ENCODE measurements at regions of chr2 and their contacts with region 1.

Region 1: GRCh38 chr2:218852911-218853667 is 6.5 kb upstream of the WNT6 start:
- DNase-seq: peak; percentile 80
- H3K4me3 Mint-ChIP-seq: no peak overlapping the region
- H3K27ac Mint-ChIP-seq: no peak overlapping the region
- H3K4me1 Mint-ChIP-seq: no peaks in the 10 kb centered on the region
- H3K27me3 Mint-ChIP-seq: peaks cover 48% of the 10 kb centered on the region

Region 2: DNA sequence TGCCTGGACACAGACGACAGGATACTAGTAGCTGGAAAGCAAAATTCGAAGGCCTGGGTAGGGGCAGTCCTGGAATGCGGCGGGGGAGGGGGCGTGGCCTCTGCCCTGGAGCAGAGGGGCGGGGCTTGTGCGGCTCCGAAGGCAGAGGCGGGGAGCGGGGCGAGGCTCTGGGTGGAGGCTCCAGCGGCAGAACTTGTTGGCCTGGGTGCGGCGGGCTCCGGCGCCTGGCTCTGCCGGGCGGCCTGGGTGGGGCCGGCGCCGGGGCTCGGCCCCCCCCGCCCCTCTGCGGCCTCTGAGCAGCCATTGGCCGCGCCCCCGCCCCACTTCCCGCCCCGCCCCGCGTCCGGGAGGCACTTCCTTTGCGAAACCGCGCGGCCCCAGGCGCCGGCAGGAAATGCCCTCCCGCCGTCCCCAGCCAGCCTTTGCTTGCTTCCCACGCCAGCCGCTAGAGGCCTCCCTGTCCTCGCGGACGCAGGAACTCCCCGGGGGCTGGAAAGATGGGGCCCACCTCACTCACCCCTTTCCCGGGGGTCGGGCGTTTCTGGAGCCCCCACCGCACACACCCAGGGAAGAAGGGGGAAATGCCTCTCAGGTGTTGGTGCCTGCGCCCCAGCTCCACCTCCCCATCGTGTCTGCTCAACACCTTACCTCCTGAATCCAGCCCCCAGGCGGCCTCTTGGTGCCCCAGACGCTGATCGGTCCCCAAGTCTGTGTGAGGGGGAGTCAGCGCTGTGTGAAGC is 446.7 kb before region 1 on chr2:
- CTCF ChIA-PET with region 1: no interaction called
- POLR2A ChIA-PET with region 1: no interaction called
- intact Hi-C with region 1: loop called (anchors 5 kb)
- DNase-seq: peak; percentile 97
- H3K4me3 Mint-ChIP-seq: peak overlapping the region; percentile 71
- H3K27ac Mint-ChIP-seq: peak overlapping the region; percentile 81
- H3K4me1 Mint-ChIP-seq: peaks cover 42% of the 10 kb centered on the region
- H3K27me3 Mint-ChIP-seq: peaks cover 5% of the 10 kb centered on the region

Region 3: GRCh38 chr2:218456849-218457248 is 396.2 kb before region 1 on chr2:
- CTCF ChIA-PET with region 1: no interaction called
- POLR2A ChIA-PET with region 1: no interaction called
- intact Hi-C with region 1: no loop called
- DNase-seq: no peak
- H3K4me3 Mint-ChIP-seq: no peak overlapping the region
- H3K27ac Mint-ChIP-seq: no peak overlapping the region
- H3K4me1 Mint-ChIP-seq: no peaks in the 10 kb centered on the region
- H3K27me3 Mint-ChIP-seq: no peaks in the 10 kb centered on the region

Region 4: GRCh38 chr2:218659258-218659987 is 193.7 kb before region 1 on chr2 and contains the starts of genes BCS1L and ZNF142:
- CTCF ChIA-PET with region 1: interaction called, 39 read pairs
- POLR2A ChIA-PET with region 1: interaction called, 3 read pairs
- intact Hi-C with region 1: no loop called
- DNase-seq: peak; percentile 98
- H3K4me3 Mint-ChIP-seq: peak within 1 kb of the TSS; percentile 93
- H3K27ac Mint-ChIP-seq: peak within 1 kb of the TSS; percentile 80
- H3K4me1 Mint-ChIP-seq: peaks cover 26% of the 10 kb centered on the region
- H3K27me3 Mint-ChIP-seq: no peaks in the 10 kb centered on the region
- total RNA-seq, gene BCS1L: 57.1 to 64.5 TPM
- total RNA-seq, gene ZNF142: 33.7 to 34.8 TPM

Region 5: DNA sequence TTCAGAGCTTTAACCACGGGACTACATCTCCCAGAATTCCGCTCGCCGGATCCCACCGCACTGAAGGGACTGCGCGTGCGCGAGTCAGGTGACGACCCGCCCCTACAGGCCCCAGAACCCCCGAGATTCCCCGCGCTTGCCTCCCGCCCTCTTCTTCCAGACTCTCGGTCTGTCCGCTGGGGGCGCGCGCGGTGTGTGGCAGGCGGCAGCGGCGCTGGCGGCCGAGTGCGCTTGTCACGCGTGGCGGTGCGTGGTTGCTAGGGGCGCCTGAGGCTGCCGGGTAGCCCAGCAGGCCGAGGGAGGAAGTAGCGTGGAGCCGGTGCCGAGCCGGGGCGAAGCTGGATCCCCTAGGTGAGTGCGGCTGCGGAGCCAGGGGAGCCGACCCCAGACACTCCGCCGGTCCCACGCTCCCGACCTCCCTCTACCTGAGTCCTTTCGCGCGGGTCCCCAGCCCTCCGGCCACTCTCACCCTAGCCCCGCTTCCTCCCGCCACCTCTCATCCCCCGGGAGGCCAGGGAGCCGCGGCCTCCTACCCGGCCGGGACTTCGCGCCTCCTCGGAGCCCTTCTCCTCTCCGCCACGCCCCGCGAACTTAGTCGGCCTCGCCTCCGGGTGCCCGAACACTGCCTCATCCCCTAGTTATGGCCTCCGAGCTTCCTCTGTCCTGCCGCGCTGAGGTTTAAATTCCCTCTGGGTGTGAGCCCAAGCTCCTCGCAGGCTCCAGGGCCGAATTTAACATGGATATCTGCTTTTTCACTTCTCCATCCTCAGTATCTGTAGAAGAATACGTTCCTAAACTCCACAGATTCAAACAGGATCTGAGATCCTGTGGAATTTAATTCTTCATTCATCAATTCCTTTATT is 142.2 kb before region 1 on chr2 and contains the start of gene TTLL4:
- CTCF ChIA-PET with region 1: interaction called, 23 read pairs
- POLR2A ChIA-PET with region 1: no interaction called
- intact Hi-C with region 1: no loop called
- DNase-seq: peak; percentile 99
- H3K4me3 Mint-ChIP-seq: peak within 1 kb of the TSS; percentile 88
- H3K27ac Mint-ChIP-seq: peak within 1 kb of the TSS; percentile 72
- H3K4me1 Mint-ChIP-seq: peaks cover 20% of the 10 kb centered on the region
- H3K27me3 Mint-ChIP-seq: no peaks in the 10 kb centered on the region
- total RNA-seq, gene TTLL4: 30.1 to 32.1 TPM

Region 6: GRCh38 chr2:218727502-218728165 is 125.5 kb before region 1 on chr2:
- CTCF ChIA-PET with region 1: interaction called, 62 read pairs
- POLR2A ChIA-PET with region 1: no interaction called
- intact Hi-C with region 1: no loop called
- DNase-seq: no peak
- H3K4me3 Mint-ChIP-seq: no peak overlapping the region
- H3K27ac Mint-ChIP-seq: no peak overlapping the region
- H3K4me1 Mint-ChIP-seq: peaks cover 27% of the 10 kb centered on the region
- H3K27me3 Mint-ChIP-seq: no peaks in the 10 kb centered on the region

Region 7: DNA sequence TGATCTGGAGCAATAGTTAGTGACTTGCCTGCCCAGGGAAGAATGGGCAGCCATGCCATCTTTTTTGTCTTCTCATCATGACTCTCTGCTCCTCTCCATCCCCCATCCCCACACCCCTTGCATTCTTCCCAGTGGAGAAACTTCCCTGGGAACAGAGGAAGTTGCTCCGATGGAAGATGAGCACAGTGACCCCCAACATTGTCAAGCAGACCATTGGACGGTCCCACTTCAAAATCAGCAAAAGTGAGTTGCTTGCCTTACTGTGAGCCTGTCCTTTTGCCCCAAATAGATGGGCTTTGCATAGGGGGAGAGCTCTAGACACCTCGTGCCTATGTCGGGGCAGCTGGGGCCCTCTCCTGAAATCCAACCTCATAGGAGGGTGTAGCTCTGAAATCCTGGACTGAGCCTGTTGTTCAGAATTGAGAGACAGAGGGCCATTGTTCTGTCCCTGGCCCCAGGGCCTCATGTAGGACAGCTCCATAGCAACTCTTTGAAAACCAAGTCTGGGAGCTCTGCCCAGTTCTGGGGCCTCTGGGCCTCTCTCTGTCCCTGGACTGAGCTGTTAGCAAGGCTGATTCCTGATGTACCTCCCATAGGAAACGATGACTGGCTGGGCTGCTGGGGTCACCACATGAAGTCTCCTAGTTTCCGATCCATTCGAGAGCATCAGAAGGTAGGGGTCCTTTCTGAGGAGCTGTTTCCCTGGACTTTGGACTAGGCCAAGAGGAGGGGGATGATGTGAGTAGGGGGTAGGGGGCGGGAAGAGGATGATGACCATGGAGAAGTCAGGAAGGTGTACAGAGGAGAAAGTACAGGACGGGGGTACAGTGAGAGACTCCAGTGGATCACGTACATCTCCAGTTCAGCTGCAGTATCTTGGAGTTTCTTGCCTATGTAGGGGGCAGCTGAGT is 107.3 kb before region 1 on chr2:
- CTCF ChIA-PET with region 1: interaction called, 11 read pairs
- POLR2A ChIA-PET with region 1: no interaction called
- intact Hi-C with region 1: no loop called
- DNase-seq: no peak
- H3K4me3 Mint-ChIP-seq: no peak overlapping the region
- H3K27ac Mint-ChIP-seq: no peak overlapping the region
- H3K4me1 Mint-ChIP-seq: peaks cover 26% of the 10 kb centered on the region
- H3K27me3 Mint-ChIP-seq: no peaks in the 10 kb centered on the region

Region 8: DNA sequence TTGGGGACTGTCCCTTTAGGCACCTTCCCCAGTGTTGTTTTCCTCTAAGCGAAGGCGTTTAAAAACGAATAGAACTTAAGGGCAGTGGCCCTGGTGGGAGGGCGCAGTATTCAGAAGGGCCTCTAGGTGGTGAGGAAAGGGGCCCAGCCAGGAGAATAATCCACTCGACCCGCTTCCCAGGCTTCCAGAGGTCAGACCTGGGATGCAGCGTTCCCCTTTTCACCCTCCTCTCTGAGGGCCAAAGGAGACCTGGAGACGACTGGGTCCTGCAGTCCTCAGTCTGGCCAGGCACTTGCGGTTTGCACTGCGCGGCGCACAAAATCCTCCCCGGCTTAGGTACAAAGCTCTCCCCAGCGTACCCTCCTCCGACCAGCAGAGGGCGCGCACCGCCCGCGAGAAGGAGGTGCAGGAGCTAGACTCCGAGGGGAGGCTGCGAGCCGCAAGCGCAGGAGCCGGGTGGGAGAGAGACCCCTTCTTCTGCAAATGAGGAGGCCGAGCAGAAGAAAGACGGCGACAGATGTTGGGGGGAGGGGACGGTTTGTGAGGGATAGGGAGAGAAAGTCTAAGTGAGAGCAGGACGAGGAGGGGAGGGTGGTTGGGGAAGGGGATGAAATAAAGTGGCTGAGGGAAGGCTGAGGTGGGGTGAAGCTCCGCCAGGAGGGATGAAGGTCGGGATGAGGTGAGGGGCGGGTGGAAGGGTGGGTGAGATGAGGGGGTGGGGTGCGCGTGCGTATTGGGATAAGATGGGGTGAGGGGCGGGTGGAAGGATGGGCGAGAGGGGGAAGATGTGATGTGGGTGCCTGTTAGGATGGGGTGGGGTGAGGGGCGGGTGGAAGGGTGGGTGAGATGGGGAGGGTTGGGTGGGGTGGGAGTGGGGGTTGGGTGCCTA is 127.0 kb after region 1 on chr2:
- CTCF ChIA-PET with region 1: interaction called, 7 read pairs
- POLR2A ChIA-PET with region 1: no interaction called
- intact Hi-C with region 1: loop called (anchors 2 kb)
- DNase-seq: peak; percentile 89
- H3K4me3 Mint-ChIP-seq: peak overlapping the region; percentile 52
- H3K27ac Mint-ChIP-seq: no peak overlapping the region
- H3K4me1 Mint-ChIP-seq: peaks cover 28% of the 10 kb centered on the region
- H3K27me3 Mint-ChIP-seq: peaks cover 62% of the 10 kb centered on the region

Measured in activated CD4-positive, alpha-beta memory T cell treated with anti-CD3 and anti-CD28 coated beads for 36 hours (primary cell).